ENCODE measurements at regions of chr6 and their contacts with region 1.

Region 1: DNA sequence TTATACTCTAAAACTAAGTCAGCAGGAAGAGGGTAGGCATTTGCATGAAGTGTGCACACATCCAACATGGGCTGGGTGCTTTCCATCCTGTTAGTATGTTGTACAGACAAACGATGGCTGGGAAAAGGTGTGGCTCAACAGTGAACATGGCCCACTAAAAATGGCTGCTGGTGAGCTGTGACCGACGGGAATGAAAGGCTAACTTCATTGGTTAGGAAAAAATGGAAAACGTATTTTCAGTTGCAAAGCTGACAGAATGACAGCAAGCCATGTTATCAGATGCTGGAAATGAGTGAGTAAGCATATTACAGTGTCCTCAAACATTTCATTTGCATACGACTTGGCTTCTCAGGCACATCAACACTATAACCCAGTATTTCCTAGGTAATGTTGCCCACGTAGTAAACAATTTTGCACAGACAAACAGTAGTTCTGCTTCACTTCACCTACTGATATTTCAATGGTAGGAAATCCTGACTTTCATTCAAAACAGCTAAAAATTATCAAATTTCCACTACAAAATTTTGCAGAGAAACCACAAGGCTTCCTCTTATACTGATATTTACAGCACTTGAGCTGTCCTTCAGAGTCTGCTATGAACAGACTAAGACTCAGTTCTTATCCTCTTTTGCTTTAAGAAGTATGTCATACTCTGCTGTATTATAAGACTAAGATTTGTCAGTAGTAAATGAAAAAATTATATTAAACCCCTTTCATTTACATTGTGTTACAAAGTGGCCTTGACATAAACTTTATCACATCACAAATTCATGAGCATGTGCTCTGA is 98.9 kb downstream of the IRF4 start:
- DNase-seq: peak; percentile 40
- H3K4me3 Mint-ChIP-seq: peak overlapping the region; percentile 62
- H3K27ac Mint-ChIP-seq: peak overlapping the region; percentile 99
- H3K4me1 Mint-ChIP-seq: peaks cover 77% of the 10 kb centered on the region
- H3K27me3 Mint-ChIP-seq: no peaks in the 10 kb centered on the region

Region 2: GRCh38 chr6:225121-225721 is 265.2 kb before region 1 on chr6:
- intact Hi-C with region 1: loop called (anchors 1 kb)
- DNase-seq: peak; percentile 63
- H3K4me3 Mint-ChIP-seq: peak overlapping the region; percentile 65
- H3K27ac Mint-ChIP-seq: peak overlapping the region; percentile 96
- H3K4me1 Mint-ChIP-seq: peaks cover 89% of the 10 kb centered on the region
- H3K27me3 Mint-ChIP-seq: no peaks in the 10 kb centered on the region

Region 3: DNA sequence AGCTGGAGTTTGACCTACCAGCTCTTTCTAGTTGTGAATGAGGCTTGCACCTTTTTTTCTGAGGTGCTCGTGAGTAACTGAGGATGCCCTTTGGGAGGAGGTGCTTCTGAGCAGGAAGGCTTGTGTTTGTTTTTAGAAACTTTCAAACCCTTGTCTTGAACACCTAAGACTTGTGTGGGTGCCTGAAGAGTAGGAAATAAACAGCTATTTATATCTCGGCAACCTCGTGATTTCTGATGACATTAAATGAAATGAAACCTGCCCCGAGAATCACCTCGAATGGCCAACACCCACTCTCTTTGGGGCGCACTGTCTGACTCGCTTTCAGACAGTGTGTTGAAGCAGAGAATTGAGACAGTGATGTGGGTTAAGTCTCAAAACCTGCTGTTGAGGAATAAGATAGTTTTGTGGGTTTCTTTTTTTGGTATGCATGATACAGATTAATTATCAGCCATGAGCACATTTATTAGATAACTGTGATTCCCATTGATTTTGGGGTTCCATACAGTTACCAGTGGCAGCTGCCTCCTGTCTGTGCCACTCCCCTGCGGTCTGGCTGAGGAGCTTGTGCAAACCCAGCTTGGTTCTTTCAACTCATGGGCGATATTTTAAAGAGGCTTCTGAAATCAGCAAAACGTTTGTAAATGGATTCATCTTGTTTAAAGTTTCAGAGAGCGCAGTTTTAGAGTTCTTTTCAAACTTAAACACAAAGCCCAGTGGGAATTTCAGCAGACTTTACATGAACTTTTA is 90.5 kb before region 1 on chr6:
- intact Hi-C with region 1: loop called (anchors 1 kb)
- DNase-seq: peak; percentile 40
- H3K4me3 Mint-ChIP-seq: peak overlapping the region; percentile 79
- H3K27ac Mint-ChIP-seq: peak overlapping the region; percentile 56
- H3K4me1 Mint-ChIP-seq: peaks cover 93% of the 10 kb centered on the region
- H3K27me3 Mint-ChIP-seq: no peaks in the 10 kb centered on the region

Region 4: DNA sequence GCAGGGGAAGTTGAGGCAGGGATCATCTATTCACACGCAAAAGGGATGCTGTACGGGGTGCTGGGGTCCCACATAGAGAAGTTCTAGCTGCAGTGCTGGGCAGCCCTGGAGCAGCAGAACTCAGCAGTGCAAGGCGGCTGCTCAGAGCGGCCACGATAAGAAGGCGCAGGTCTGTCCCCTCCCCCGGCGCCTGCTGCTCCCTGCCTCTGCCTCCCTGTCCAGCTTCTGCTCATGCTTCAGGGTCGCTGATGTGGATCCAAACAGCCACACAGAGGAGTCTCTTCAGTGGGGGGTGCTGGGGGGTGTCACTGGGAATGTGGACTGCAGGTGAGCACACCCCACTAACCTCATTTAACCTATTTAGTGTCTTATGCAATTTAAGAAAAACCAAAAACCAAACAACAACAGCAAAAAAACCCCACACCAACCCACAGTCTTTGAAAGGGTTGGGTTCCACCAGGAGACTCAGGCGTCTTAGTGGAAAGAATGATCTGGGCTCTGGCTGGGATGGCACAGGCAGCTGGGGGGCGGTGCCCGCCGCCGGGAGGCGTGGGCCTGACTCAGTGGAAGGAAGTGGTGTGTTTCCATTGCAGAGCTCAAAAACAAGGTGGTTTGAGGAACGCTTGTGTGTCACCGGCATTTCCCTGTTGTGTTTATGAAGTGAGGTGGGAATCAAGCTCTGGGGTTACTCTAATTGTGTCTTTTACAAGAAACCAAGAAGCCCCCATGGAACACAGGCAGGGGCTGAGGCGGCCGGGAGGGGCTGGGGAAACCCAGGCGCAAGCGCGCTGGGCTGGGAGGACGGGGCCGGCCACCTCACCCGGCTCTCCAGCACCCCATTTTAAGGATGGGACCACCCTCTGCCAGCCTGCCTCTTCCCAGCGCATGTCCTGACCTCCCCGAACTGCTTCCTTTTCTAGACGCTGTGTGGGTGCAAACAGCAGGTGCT is 43.8 kb before region 1 on chr6:
- intact Hi-C with region 1: loop called (anchors 1 kb)
- DNase-seq: peak; percentile 92
- H3K4me3 Mint-ChIP-seq: peak overlapping the region; percentile 63
- H3K27ac Mint-ChIP-seq: peak overlapping the region; percentile 98
- H3K4me1 Mint-ChIP-seq: peaks cover 59% of the 10 kb centered on the region
- H3K27me3 Mint-ChIP-seq: peaks cover 2% of the 10 kb centered on the region

Region 5: GRCh38 chr6:465531-466348 is 24.7 kb before region 1 on chr6:
- intact Hi-C with region 1: no loop called
- DNase-seq: no peak
- H3K4me3 Mint-ChIP-seq: no peak overlapping the region
- H3K27ac Mint-ChIP-seq: peak overlapping the region; percentile 10
- H3K4me1 Mint-ChIP-seq: peaks cover 56% of the 10 kb centered on the region
- H3K27me3 Mint-ChIP-seq: peaks cover 8% of the 10 kb centered on the region

Region 6: GRCh38 chr6:548517-548916 is 58.1 kb after region 1 on chr6:
- intact Hi-C with region 1: loop called (anchors 1 kb)
- DNase-seq: peak; percentile 43
- H3K4me3 Mint-ChIP-seq: peak overlapping the region; percentile 72
- H3K27ac Mint-ChIP-seq: peak overlapping the region; percentile 95
- H3K4me1 Mint-ChIP-seq: peaks cover 75% of the 10 kb centered on the region
- H3K27me3 Mint-ChIP-seq: no peaks in the 10 kb centered on the region